Activated naive CD4-positive, alpha-beta T cell treated with anti-CD3 and anti-CD28 coated beads for 36 hours (primary cell): ENCODE measurements at regions of chr14 and their contacts with region 1.

Region 1: GRCh38 chr14:77320238-77320935 is at the start of gene POMT2:
- DNase-seq: peak; percentile 91
- H3K4me3 Mint-ChIP-seq: peak within 1 kb of the TSS; percentile 91
- H3K27ac Mint-ChIP-seq: peak within 1 kb of the TSS; percentile 97
- H3K4me1 Mint-ChIP-seq: peaks cover 15% of the 10 kb centered on the region
- H3K27me3 Mint-ChIP-seq: no peaks in the 10 kb centered on the region
- total RNA-seq, gene POMT2: 11.3 to 14.5 TPM

Region 2: DNA sequence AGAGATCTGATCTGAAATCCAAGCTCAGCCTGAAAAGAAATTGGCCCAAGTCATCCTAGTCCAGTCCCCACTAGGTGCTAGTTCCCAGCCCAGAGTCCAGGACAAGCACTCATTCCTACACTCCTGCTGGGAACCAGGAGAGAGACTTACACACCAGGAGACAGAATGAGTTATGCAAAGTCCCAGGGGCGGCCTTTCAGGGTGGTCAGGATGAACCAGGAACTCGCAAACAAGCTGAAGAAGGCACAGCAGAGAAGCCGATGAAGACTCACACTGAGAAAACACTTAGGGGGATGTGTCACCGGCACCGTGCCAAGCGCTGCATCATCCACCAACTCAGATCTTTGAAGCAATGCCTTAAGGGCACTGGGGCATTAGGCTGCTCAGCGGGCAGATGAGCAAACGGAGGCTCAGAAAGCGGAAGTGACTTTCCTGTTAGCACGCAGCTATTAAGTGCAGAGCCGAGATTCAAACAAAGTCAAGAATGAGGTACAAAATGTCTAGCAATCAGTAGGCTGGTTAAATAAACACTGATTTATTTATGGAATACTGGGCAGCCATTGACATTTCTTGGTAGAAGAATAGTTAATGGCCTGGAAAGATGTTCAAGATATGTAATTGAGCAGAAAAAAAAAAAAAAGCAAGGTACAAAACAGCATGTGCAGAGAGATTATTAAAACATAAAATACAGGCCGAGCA is 415.5 kb before region 1 on chr14:
- CTCF ChIA-PET with region 1: interaction called, 3 read pairs
- intact Hi-C with region 1: loop called (anchors 1 kb)
- DNase-seq: peak; percentile 95
- H3K4me3 Mint-ChIP-seq: no peak overlapping the region
- H3K27ac Mint-ChIP-seq: no peak overlapping the region
- H3K4me1 Mint-ChIP-seq: peaks cover 30% of the 10 kb centered on the region
- H3K27me3 Mint-ChIP-seq: no peaks in the 10 kb centered on the region

Region 3: GRCh38 chr14:77033622-77034521 is 286.5 kb before region 1 on chr14:
- CTCF ChIA-PET with region 1: no interaction called
- intact Hi-C with region 1: loop called (anchors 2 kb)
- DNase-seq: peak; percentile 93
- H3K4me3 Mint-ChIP-seq: peak overlapping the region; percentile 83
- H3K27ac Mint-ChIP-seq: peak overlapping the region; percentile 95
- H3K4me1 Mint-ChIP-seq: peaks cover 73% of the 10 kb centered on the region
- H3K27me3 Mint-ChIP-seq: no peaks in the 10 kb centered on the region

Region 4: DNA sequence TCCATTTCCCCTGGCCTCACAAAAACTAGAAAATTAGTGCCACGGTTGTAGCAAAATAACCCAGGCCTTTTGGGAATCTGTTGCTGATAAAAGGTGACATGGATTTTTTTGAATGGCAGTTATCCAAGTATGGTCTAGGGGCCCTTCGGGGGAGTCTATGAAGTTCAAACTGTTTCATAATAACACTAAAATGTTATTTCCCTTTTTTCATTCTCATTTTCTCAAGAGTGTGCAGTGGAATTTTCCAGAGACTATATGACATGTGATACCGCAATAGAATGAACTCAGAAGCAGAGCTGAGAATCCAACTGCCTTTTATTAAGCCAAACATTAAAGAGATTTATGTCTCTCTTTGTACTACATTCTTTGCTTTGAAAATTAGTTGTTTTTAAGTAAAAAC is 27.4 kb after region 1 on chr14:
- CTCF ChIA-PET with region 1: no interaction called
- intact Hi-C with region 1: no loop called
- DNase-seq: no peak
- H3K4me3 Mint-ChIP-seq: no peak overlapping the region
- H3K27ac Mint-ChIP-seq: no peak overlapping the region
- H3K4me1 Mint-ChIP-seq: no peaks in the 10 kb centered on the region
- H3K27me3 Mint-ChIP-seq: no peaks in the 10 kb centered on the region

Region 5: DNA sequence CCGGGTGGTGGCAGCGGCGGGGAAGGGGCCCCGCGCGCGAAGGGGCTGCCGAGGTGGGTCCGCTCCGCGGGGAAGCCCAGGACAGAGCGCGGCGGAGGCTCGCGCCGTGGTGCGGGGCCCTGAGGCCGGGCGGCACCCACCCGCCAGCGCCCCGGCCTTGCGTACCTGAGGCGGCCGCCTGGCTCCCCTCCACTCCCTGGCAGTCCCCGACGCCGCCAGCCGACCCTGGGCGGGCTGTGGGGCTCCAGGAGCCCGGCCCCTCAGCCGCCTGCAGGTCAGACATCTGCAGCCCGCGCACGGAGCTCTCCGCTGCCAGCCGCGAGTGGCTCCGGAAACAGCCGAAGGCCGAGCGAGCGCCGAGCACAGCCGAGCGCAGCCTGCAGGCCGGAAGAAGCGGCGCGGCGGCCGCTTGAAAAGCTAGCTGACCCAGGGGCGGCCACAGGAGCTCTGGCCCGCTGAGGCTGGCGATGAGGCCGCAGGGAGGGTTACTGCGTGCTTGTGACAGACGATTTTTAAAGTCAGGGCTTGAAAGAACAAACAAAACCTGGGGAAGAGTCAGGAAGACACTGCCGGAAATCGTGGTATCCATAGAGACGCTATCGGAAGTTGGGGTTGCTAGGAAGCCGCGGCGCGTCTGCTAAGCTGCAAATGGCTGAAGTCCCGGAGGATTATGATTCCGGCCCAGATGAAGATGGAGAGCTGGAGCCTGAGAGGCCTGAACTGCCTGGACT is 56.5 kb after region 1 on chr14 and contains the starts of genes SAMD15 and TMED8:
- CTCF ChIA-PET with region 1: interaction called, 3 read pairs
- intact Hi-C with region 1: loop called (anchors 1 kb)
- DNase-seq: peak; percentile 84
- H3K4me3 Mint-ChIP-seq: peak within 1 kb of the TSS; percentile 90
- H3K27ac Mint-ChIP-seq: peak within 1 kb of the TSS; percentile 80
- H3K4me1 Mint-ChIP-seq: peaks cover 38% of the 10 kb centered on the region
- H3K27me3 Mint-ChIP-seq: no peaks in the 10 kb centered on the region
- total RNA-seq, gene SAMD15: 0.10 TPM in 1 of 2 experiments, not detected in the other
- total RNA-seq, gene TMED8: 21.5 to 21.7 TPM

Region 6: DNA sequence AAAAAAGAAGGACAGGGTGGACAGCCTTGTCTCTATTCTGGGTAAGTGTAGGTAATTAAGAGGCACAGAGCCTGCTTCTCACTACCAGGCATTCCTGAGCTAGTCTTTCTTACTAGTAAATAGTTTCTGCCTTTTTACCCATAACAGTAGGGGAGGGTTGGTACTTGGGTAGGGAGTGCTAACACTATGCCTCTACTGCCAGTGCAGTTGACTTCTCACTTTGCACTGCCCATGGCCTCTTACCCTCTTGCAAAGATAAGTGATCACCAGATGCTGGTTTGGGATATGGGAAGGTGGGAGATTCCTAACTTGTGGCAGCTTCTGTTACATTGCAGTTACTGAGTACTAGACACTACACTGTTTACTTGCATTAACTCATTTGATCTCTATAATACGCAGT is 149.2 kb after region 1 on chr14:
- CTCF ChIA-PET with region 1: no interaction called
- intact Hi-C with region 1: no loop called
- DNase-seq: no peak
- H3K4me3 Mint-ChIP-seq: no peak overlapping the region
- H3K27ac Mint-ChIP-seq: no peak overlapping the region
- H3K4me1 Mint-ChIP-seq: no peaks in the 10 kb centered on the region
- H3K27me3 Mint-ChIP-seq: no peaks in the 10 kb centered on the region

Region 7: GRCh38 chr14:77565289-77565993 is 245.1 kb after region 1 on chr14:
- CTCF ChIA-PET with region 1: no interaction called
- intact Hi-C with region 1: no loop called
- DNase-seq: no peak
- H3K4me3 Mint-ChIP-seq: no peak overlapping the region
- H3K27ac Mint-ChIP-seq: peak overlapping the region; percentile 44
- H3K4me1 Mint-ChIP-seq: peaks cover 10% of the 10 kb centered on the region
- H3K27me3 Mint-ChIP-seq: no peaks in the 10 kb centered on the region

Region 8: DNA sequence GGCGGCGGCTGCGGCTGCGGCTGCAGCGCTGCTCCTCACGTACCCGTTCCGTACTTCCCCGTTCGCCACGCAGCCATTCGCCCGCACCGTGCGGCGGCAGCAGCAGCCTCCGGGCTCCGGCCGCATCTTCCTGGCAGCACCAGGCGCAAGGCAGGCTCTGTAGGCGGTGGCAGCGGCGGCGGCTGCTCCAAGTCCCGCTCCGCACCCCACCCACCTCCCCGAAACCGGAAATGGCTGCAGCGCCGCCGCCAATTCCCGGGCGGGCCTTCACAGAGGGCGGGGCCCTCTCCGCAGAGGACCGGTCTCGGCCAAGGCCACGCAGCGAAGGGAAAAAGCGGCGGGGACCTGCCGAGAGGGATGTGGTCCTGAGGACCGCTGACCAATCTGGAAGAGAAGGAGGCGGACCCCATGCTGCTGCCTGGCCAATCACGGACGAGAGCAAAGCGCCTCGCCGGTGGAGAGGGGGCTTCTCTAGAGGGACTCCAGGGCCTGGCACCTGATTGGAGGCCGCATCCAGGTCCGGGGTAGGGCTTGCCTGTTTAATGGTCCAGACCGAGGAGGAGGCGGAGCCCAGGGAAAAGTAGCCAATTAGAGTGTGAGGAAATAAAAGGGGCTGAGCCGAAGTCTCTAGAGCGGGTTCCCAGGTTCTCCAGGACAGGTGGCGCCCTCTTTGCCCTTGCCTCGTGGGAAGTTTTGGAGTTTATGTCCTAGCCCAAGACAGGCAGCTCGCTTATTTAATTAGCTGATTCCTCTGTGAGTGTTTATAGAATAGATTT is 296.3 kb after region 1 on chr14 and contains the start of gene SPTLC2:
- CTCF ChIA-PET with region 1: no interaction called
- intact Hi-C with region 1: loop called (anchors 1 kb)
- DNase-seq: peak; percentile 96
- H3K4me3 Mint-ChIP-seq: peak within 1 kb of the TSS; percentile 90
- H3K27ac Mint-ChIP-seq: peak within 1 kb of the TSS; percentile 79
- H3K4me1 Mint-ChIP-seq: peaks cover 32% of the 10 kb centered on the region
- H3K27me3 Mint-ChIP-seq: no peaks in the 10 kb centered on the region
- total RNA-seq, gene SPTLC2: 16.1 to 18.1 TPM

Region 9: GRCh38 chr14:77760381-77761246 is 440.2 kb after region 1 on chr14 and contains the start of gene SNW1:
- CTCF ChIA-PET with region 1: no interaction called
- intact Hi-C with region 1: loop called (anchors 1 kb)
- DNase-seq: peak; percentile 95
- H3K4me3 Mint-ChIP-seq: peak within 1 kb of the TSS; percentile 94
- H3K27ac Mint-ChIP-seq: peak within 1 kb of the TSS; percentile 95
- H3K4me1 Mint-ChIP-seq: peaks cover 32% of the 10 kb centered on the region
- H3K27me3 Mint-ChIP-seq: no peaks in the 10 kb centered on the region
- total RNA-seq, gene SNW1: 117 to 129 TPM